Activated naive CD4-positive, alpha-beta T cell treated with anti-CD3 and anti-CD28 coated beads, Interleukin-2, amount 10 ng/mL, durations not matched to agents 7 days and 5 days (primary cell): ENCODE measurements at regions of chr22 and their contacts with region 1.

Region 1: GRCh38 chr22:26461188-26461810 is 22.3 kb downstream of the HPS4 start:
- DNase-seq: peak; percentile 56
- H3K4me3 Mint-ChIP-seq: no peak overlapping the region
- H3K27ac Mint-ChIP-seq: no peak overlapping the region
- H3K4me1 Mint-ChIP-seq: no peaks in the 10 kb centered on the region
- H3K27me3 Mint-ChIP-seq: no peaks in the 10 kb centered on the region

Region 2: GRCh38 chr22:26364066-26365015 is 97.0 kb before region 1 on chr22:
- CTCF ChIA-PET with region 1: interaction called, 54 read pairs
- DNase-seq: peak; percentile 69
- H3K4me3 Mint-ChIP-seq: no peak overlapping the region
- H3K27ac Mint-ChIP-seq: no peak overlapping the region
- H3K4me1 Mint-ChIP-seq: peaks cover 6% of the 10 kb centered on the region
- H3K27me3 Mint-ChIP-seq: peaks cover 11% of the 10 kb centered on the region

Region 3: DNA sequence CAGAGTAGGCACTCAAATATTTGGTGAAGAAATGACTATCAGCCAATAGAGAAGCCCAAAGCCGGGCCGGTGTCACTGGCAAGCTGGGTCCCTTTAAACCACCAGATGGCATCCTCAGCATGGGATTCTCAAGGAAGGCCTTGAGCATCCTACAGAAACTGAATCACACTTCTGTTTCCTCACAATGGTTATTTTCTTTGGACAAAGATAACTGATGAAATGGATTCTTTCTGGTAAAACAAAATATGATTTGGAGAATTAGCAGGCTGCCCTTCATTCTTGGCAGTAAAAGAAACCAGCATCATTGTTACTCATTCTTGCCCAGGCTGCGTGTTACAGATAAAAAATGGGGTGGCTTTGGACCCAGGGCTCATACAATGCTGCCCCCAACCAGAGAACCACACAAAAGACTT is 62.6 kb before region 1 on chr22:
- CTCF ChIA-PET with region 1: interaction called, 59 read pairs
- DNase-seq: peak; percentile 77
- H3K4me3 Mint-ChIP-seq: no peak overlapping the region
- H3K27ac Mint-ChIP-seq: no peak overlapping the region
- H3K4me1 Mint-ChIP-seq: peaks cover 4% of the 10 kb centered on the region
- H3K27me3 Mint-ChIP-seq: peaks cover 29% of the 10 kb centered on the region

Region 4: GRCh38 chr22:26428515-26429457 is 32.5 kb before region 1 on chr22 and contains the start of gene ASPHD2:
- CTCF ChIA-PET with region 1: interaction called, 13 read pairs
- DNase-seq: peak; percentile 84
- H3K4me3 Mint-ChIP-seq: peak within 1 kb of the TSS; percentile 85
- H3K27ac Mint-ChIP-seq: peak within 1 kb of the TSS; percentile 95
- H3K4me1 Mint-ChIP-seq: peaks cover 54% of the 10 kb centered on the region
- H3K27me3 Mint-ChIP-seq: peaks cover 22% of the 10 kb centered on the region

Region 5: DNA sequence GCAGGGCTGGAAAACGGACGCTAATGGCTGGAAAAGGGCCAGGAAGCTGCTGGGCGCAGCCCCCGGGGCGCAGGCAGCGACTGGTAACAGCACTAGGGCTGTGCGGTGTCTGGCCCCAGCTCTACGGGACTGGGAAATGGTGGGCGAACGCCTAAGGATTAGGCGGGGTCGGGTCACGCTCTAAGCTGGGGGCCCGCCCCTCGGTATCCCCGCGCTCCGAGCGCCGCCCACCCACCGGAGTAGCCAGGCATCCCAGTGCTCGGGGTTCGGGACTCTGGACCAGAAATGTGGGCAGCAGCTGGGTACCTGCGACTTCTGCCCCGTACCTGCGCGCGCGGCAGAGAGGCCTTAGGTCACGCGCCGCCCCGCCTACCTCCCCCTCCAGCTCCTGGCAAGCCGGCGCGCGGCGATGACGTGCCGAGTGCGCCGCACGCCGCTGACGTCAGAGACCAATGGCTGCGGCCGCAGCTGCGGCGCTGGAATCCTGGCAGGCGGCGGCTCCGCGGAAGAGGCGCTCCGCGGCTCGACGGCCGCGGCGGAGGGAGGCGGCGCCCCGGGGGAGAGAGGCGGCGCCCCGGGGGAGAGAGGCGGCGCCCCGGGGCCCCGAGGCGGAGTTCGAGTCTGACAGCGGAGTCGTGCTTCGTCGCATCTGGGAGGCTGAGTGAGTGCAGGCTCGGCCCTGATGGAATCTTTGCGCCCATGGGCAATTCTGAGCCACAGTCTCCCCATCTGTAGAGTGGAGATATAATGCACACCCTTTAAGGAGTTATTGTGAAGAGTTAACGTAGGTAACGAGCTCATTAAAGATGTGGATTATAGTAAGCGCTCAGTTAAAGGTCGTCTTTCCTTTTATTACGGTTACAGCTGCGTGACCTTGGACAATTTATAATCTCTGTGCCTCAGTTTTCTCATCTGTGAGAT is 22.4 kb after region 1 on chr22 and contains the starts of genes HPS4 and SRRD:
- CTCF ChIA-PET with region 1: interaction called, 12 read pairs
- DNase-seq: peak; percentile 93
- H3K4me3 Mint-ChIP-seq: peak within 1 kb of the TSS; percentile 92
- H3K27ac Mint-ChIP-seq: peak within 1 kb of the TSS; percentile 89
- H3K4me1 Mint-ChIP-seq: peaks cover 70% of the 10 kb centered on the region
- H3K27me3 Mint-ChIP-seq: no peaks in the 10 kb centered on the region